Right ventricle myocardium inferior (tissue), 1 donor: ENCODE measurements at regions of chr11 and their contacts with region 1.

Region 1: GRCh38 chr11:74018331-74019005 is 9.6 kb upstream of the UCP3 start:
- DNase-seq: peak; percentile 95
- ATAC-seq: peak; percentile 96

Region 2: DNA sequence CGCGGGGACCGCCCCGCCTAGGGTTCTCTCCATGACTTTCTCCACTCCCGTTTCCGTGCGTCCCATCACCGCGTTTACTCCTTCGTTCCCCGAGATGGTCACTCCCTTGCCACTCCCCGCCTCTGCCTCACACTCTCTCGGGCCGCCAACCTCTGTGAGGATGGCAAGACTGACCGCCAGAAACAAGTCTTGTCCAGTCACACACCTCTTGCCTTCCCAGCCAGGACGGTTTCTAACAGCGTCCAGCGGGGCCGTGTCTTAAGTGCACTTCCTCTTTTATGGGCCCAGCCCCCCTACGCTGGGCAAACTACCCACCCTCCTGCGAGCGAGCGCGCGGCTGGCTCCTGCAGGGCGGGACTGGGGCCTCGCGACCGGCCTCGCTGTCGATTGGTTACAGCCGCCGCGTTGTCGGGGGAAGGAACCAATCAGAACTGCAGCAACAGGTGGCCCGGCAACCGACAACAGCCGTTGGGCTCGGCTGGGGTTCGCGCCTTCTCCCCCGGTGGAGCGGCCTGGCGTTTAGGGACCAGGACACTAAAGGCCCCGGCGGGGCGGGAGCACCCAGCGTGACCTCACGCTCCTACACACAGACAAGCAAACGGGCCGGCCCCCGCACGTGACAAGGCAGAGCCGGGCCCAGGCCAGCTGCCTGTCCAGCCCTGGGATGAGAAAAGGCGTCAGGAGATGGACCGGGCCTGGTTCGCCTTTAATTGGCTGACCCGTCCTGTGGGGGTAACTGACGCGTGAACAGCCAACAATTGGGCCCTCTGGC is 35.3 kb before region 1 on chr11:
- intact Hi-C with region 1: loop called (anchors 2 kb)
- DNase-seq: peak; percentile 98
- ATAC-seq: peak; percentile 96

Region 3: GRCh38 chr11:74443071-74443864 is 424.8 kb after region 1 on chr11:
- intact Hi-C with region 1: no loop called
- DNase-seq: no peak
- ATAC-seq: peak; percentile 67